ENCODE measurements at regions of chr5 and their contacts with region 1.

Region 1: GRCh38 chr5:81301271-81302015 is at the start of gene ZCCHC9:
- DNase-seq: peak; percentile 87 to 91
- H3K4me3 ChIP-seq: peak within 1 kb of the TSS; percentile 83 to 95 (median 92)
- H3K27ac ChIP-seq: peak within 1 kb of the TSS; percentile 83
- H3K4me1 ChIP-seq: peaks cover 0 to 8% (median 5%) of the 10 kb centered on the region in 4 experiments; a peak in 3 of 7 replicates
- H3K27me3 ChIP-seq: no peaks in the 10 kb centered on the region
- CTCF ChIP-seq: peak in 1 of 3 experiments; percentile 14; a peak in 1 of 4 replicates
- EP300 ChIP-seq: no peak
- POLR2A ChIP-seq: peak; percentile 84 to 98
- RAD21 ChIP-seq: peak in 1 of 2 experiments; percentile 11; a peak in 1 of 4 replicates
- total RNA-seq, gene ZCCHC9: 28.9 and 33.6 TPM in 2 replicates

Region 2: GRCh38 chr5:80967500-80968181 is 333.8 kb before region 1 on chr5:
- CTCF ChIA-PET with region 1: no interaction called
- POLR2A ChIA-PET with region 1: no interaction called
- DNase-seq: no peak
- H3K4me3 ChIP-seq: no peak overlapping the region
- H3K27ac ChIP-seq: no peak overlapping the region
- H3K4me1 ChIP-seq: peaks cover 0 to 8% (median 3%) of the 10 kb centered on the region in 4 experiments; a peak in 4 of 7 replicates
- H3K27me3 ChIP-seq: no peaks in the 10 kb centered on the region
- CTCF ChIP-seq: no peak
- EP300 ChIP-seq: no peak
- POLR2A ChIP-seq: no peak
- RAD21 ChIP-seq: no peak

Region 3: GRCh38 chr5:81216152-81216551 is 85.3 kb before region 1 on chr5:
- CTCF ChIA-PET with region 1: no interaction called
- POLR2A ChIA-PET with region 1: no interaction called
- DNase-seq: no peak
- H3K4me3 ChIP-seq: no peak overlapping the region
- H3K27ac ChIP-seq: no peak overlapping the region
- H3K4me1 ChIP-seq: no peaks in the 10 kb centered on the region
- H3K27me3 ChIP-seq: no peaks in the 10 kb centered on the region
- CTCF ChIP-seq: no peak
- EP300 ChIP-seq: no peak
- POLR2A ChIP-seq: no peak
- RAD21 ChIP-seq: no peak

Region 4: DNA sequence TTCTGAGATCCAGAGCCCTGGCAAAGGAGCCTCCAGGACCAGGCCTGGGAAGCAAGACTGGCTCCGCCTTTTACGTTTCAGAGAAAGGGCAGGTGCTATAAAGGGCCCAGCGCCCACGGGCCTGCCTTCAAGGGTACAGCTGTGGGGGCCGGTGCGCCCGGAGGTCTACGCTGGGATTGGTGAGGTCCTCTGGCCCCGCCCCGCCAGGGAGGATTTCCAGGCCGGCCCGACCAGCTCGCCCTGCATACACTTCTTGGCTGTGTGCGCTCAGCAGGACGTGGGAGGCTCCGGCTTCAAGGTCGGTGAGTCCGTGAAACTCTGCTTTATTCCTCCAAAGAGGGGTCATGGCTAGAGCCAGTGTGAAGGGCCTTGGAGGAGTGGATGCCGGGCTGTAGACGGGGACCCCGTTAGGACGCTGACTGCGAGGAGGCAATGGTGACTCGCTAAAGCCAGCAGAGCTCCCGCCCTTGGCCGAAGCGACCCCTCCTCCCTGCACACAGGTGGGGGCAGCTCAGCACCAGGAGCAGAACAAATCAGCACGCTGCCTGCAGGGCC is 68.3 kb before region 1 on chr5 and contains the start of gene CKMT2:
- CTCF ChIA-PET with region 1: interaction called, 19 read pairs
- POLR2A ChIA-PET with region 1: interaction called, 18 read pairs
- DNase-seq: peak; percentile 61 to 93
- H3K4me3 ChIP-seq: peak within 1 kb of the TSS; percentile 50 to 61 (median 57)
- H3K27ac ChIP-seq: peak within 1 kb of the TSS; percentile 42; the same call in 1 of the 2 replicates
- H3K4me1 ChIP-seq: peaks cover 3 to 15% (median 5%) of the 10 kb centered on the region in 4 experiments
- H3K27me3 ChIP-seq: no peaks in the 10 kb centered on the region
- CTCF ChIP-seq: no peak
- EP300 ChIP-seq: no peak
- POLR2A ChIP-seq: peak; percentile 50 to 90
- RAD21 ChIP-seq: no peak; a peak in 1 of 4 replicates
- total RNA-seq, gene CKMT2: 1.2 and 2.4 TPM in 2 replicates

Region 5: GRCh38 chr5:81238460-81238859 is 63.0 kb before region 1 on chr5:
- CTCF ChIA-PET with region 1: interaction called, 19 read pairs
- POLR2A ChIA-PET with region 1: interaction called, 18 read pairs
- DNase-seq: no peak
- H3K4me3 ChIP-seq: no peak overlapping the region
- H3K27ac ChIP-seq: no peak overlapping the region
- H3K4me1 ChIP-seq: peaks cover 0 to 8% (median 6%) of the 10 kb centered on the region in 4 experiments; a peak in 5 of 7 replicates
- H3K27me3 ChIP-seq: no peaks in the 10 kb centered on the region
- CTCF ChIP-seq: no peak
- EP300 ChIP-seq: no peak
- POLR2A ChIP-seq: no peak
- RAD21 ChIP-seq: no peak

Region 6: GRCh38 chr5:81315336-81315735 is 13.9 kb after region 1 on chr5:
- CTCF ChIA-PET with region 1: interaction called, 10 read pairs
- POLR2A ChIA-PET with region 1: interaction called, 33 read pairs
- DNase-seq: no peak
- H3K4me3 ChIP-seq: no peak overlapping the region
- H3K27ac ChIP-seq: no peak overlapping the region
- H3K4me1 ChIP-seq: peaks cover 0 to 6% (median 1%) of the 10 kb centered on the region in 4 experiments; a peak in 2 of 7 replicates
- H3K27me3 ChIP-seq: no peaks in the 10 kb centered on the region
- CTCF ChIP-seq: no peak
- EP300 ChIP-seq: no peak
- POLR2A ChIP-seq: no peak
- RAD21 ChIP-seq: no peak

Region 7: GRCh38 chr5:81450940-81451339 is 149.5 kb after region 1 on chr5:
- CTCF ChIA-PET with region 1: no interaction called
- POLR2A ChIA-PET with region 1: no interaction called
- DNase-seq: no peak
- H3K4me3 ChIP-seq: no peak overlapping the region
- H3K27ac ChIP-seq: no peak overlapping the region
- H3K4me1 ChIP-seq: no peaks in the 10 kb centered on the region
- H3K27me3 ChIP-seq: peaks cover 0 to 1% (median 0%) of the 10 kb centered on the region in 4 experiments; a peak in 1 of 7 replicates
- CTCF ChIP-seq: no peak
- EP300 ChIP-seq: no peak
- POLR2A ChIP-seq: no peak
- RAD21 ChIP-seq: no peak